Activated B cell treated with CpG ODN at 0.5 μM for 24 hours (primary cell): ENCODE measurements at regions of chr9 and their contacts with region 1.

Region 1: GRCh38 chr9:126500684-126501382 is 112.9 kb upstream of the LMX1B start:
- DNase-seq: peak; percentile 71
- ATAC-seq: peak; percentile 73
- H3K4me3 Mint-ChIP-seq: peak overlapping the region; percentile 52
- H3K27ac Mint-ChIP-seq: no peak overlapping the region
- H3K4me1 Mint-ChIP-seq: peaks cover 7% of the 10 kb centered on the region
- H3K27me3 Mint-ChIP-seq: peaks cover 26% of the 10 kb centered on the region
- CTCF ChIP-seq: peak; percentile 95

Region 2: DNA sequence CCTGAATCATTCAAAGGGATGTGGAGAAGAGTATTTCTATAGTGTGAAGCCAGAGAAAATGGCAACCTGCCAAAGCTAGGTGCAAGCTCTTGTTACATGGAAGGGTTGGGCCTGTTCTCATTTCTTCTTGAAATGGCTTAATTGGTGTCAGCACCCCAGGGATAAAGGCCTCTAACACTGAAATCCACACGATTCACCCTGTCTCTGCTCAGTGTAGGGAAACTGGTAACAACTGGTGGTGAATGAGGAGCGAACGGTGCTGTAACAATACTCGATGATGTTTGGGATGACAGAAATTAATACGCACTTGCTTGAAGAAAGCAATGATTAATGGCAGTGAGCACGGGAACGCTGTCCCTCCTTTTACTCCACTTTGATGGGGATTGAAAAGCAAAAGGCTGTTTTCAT is 737.4 kb before region 1 on chr9:
- CTCF ChIA-PET with region 1: no interaction called
- POLR2A ChIA-PET with region 1: no interaction called
- intact Hi-C with region 1: no loop called
- DNase-seq: no peak
- ATAC-seq: no peak
- H3K4me3 Mint-ChIP-seq: no peak overlapping the region
- H3K27ac Mint-ChIP-seq: no peak overlapping the region
- H3K4me1 Mint-ChIP-seq: peaks cover 44% of the 10 kb centered on the region
- H3K27me3 Mint-ChIP-seq: no peaks in the 10 kb centered on the region
- CTCF ChIP-seq: no peak

Region 3: GRCh38 chr9:126514047-126514821 is 13.4 kb after region 1 on chr9:
- CTCF ChIA-PET with region 1: interaction called, 7 read pairs
- POLR2A ChIA-PET with region 1: no interaction called
- intact Hi-C with region 1: loop called (anchors 1 kb)
- DNase-seq: peak; percentile 79
- ATAC-seq: peak; percentile 96
- H3K4me3 Mint-ChIP-seq: no peak overlapping the region
- H3K27ac Mint-ChIP-seq: no peak overlapping the region
- H3K4me1 Mint-ChIP-seq: peaks cover 22% of the 10 kb centered on the region
- H3K27me3 Mint-ChIP-seq: peaks cover 48% of the 10 kb centered on the region
- CTCF ChIP-seq: no peak

Region 4: GRCh38 chr9:126532019-126532462 is 31.2 kb after region 1 on chr9:
- CTCF ChIA-PET with region 1: interaction called, 5 read pairs
- POLR2A ChIA-PET with region 1: no interaction called
- intact Hi-C with region 1: loop called (anchors 1 kb)
- DNase-seq: no peak
- ATAC-seq: no peak
- H3K4me3 Mint-ChIP-seq: no peak overlapping the region
- H3K27ac Mint-ChIP-seq: peak overlapping the region; percentile 85
- H3K4me1 Mint-ChIP-seq: peaks cover 49% of the 10 kb centered on the region
- H3K27me3 Mint-ChIP-seq: no peaks in the 10 kb centered on the region
- CTCF ChIP-seq: no peak

Region 5: GRCh38 chr9:126550891-126551351 is 50.1 kb after region 1 on chr9:
- CTCF ChIA-PET with region 1: interaction called, 189 read pairs
- POLR2A ChIA-PET with region 1: interaction called, 3 read pairs
- intact Hi-C with region 1: no loop called
- DNase-seq: no peak
- ATAC-seq: no peak
- H3K4me3 Mint-ChIP-seq: no peak overlapping the region
- H3K27ac Mint-ChIP-seq: no peak overlapping the region
- H3K4me1 Mint-ChIP-seq: no peaks in the 10 kb centered on the region
- H3K27me3 Mint-ChIP-seq: no peaks in the 10 kb centered on the region
- CTCF ChIP-seq: no peak

Region 6: DNA sequence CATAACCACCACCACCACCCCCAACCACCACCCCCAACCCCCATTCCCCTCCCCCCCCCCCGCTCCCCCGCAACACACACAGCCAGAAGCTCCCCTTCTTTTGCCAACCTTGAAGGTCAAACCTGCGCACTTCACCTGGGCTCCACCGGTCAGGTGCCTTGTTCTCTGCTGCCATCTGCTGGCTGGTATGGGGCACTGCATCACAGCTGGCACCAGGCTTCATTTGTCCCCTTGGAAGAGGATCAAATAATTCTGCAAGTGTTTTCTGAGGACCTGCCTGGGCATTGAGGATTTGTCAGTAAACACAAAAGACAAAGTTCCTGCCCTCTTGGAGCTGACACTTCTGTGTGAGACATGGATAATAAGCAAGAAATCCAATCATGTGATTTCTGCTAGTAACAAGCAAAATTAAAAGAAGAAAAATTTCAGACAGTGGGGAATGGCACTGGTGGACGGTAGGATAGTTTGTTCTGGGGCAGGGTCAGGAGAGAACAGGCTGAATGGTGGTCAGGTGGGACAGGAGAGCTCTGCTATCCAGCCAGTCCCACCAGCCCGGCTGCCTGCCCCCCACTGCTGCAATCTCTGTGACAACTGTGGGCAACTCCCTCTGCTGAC is 57.3 kb after region 1 on chr9:
- CTCF ChIA-PET with region 1: interaction called, 189 read pairs
- POLR2A ChIA-PET with region 1: no interaction called
- intact Hi-C with region 1: loop called (anchors 1 kb)
- DNase-seq: peak; percentile 53
- ATAC-seq: peak; percentile 85
- H3K4me3 Mint-ChIP-seq: no peak overlapping the region
- H3K27ac Mint-ChIP-seq: peak overlapping the region; percentile 62
- H3K4me1 Mint-ChIP-seq: no peaks in the 10 kb centered on the region
- H3K27me3 Mint-ChIP-seq: peaks cover 31% of the 10 kb centered on the region
- CTCF ChIP-seq: no peak

Region 7: DNA sequence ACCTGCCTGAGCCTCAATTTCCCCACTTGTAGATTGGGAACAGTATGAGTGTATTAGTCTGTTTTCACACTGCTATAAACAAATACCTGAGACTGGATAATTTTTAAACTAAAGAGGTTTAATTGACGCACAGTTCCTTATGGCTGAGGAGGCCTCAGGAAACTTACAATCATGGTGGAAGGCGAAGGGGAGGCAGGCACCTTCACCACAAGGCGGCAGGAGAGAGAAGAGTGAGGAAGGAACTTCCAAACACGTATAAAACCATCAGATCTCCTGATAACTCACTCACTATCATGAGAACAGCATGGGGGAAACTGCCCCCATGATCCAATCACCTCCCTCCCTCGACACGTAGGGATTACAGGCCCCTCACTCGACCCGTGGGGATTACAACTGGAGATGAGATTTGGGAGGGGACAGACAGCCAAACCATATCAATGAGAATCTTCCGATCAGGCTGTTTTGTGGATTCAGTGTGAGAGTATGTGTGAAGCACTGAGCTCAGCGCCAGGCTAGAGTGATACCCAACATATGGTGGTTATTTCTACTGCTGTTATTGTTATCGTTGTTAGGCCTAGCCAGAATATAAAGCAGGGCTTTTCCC is 98.3 kb after region 1 on chr9:
- CTCF ChIA-PET with region 1: no interaction called
- POLR2A ChIA-PET with region 1: no interaction called
- intact Hi-C with region 1: no loop called
- DNase-seq: no peak
- ATAC-seq: no peak
- H3K4me3 Mint-ChIP-seq: no peak overlapping the region
- H3K27ac Mint-ChIP-seq: no peak overlapping the region
- H3K4me1 Mint-ChIP-seq: no peaks in the 10 kb centered on the region
- H3K27me3 Mint-ChIP-seq: peaks cover 50% of the 10 kb centered on the region
- CTCF ChIP-seq: no peak